Common myeloid progenitor, CD34-positive (primary cell): ENCODE measurements at regions of chr17 and their contacts with region 1.

Region 1: DNA sequence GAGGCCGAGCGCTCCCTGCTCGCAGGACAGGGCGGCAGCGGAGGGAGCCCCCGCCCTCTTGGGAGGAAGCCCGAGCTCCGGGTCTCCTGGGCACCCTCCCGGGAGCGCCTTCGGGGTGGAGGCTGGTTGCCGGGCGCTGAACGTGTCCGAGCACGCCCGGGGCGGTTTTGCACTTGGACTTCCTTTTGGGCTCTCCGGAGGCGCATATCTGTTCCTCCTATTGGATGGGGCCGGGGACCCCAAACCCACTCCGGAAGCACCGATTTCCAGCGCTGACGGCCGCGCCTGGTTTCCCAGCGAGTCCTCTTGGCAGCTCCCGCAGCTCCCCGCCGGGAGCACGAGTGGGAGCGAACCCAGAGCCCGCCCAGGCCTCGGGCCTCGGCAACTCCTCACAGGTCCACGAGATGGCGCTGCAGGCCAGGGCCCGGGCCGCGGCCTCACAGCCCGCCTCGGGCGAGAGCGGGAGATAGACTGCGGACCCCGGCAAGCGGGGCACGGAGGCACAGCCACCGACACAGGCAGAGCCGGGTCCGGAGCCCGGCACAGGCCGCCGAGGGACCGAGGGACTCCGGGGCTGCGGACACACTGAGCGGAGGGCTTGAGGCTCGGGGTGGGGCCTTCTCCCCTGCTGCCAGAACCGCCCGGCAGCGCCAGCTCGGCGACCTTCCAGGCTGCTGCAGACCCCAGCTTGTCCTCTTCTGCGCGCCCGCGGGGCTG is 12.7 kb downstream of the TBX2 start:
- DNase-seq: peak; percentile 68 to 75 (median 75)
- H3K4me3 ChIP-seq: peak overlapping the region; percentile 31 to 76 (median 66)
- H3K27ac ChIP-seq: no peak overlapping the region
- H3K4me1 ChIP-seq: peaks cover 4 to 54% (median 40%) of the 10 kb centered on the region in 4 experiments
- H3K27me3 ChIP-seq: peaks cover 0 to 89% (median 41%) of the 10 kb centered on the region in 5 experiments

Region 2: GRCh38 chr17:61551255-61551742 is 139.0 kb after region 1 on chr17:
- CTCF ChIA-PET with region 1: interaction called, 11 read pairs
- POLR2A ChIA-PET with region 1: no interaction called
- DNase-seq: peak; percentile 42 to 68 (median 67)
- H3K4me3 ChIP-seq: no peak overlapping the region
- H3K27ac ChIP-seq: no peak overlapping the region
- H3K4me1 ChIP-seq: no peaks in the 10 kb centered on the region
- H3K27me3 ChIP-seq: peaks cover 3 to 38% (median 10%) of the 10 kb centered on the region in 5 experiments

Region 3: DNA sequence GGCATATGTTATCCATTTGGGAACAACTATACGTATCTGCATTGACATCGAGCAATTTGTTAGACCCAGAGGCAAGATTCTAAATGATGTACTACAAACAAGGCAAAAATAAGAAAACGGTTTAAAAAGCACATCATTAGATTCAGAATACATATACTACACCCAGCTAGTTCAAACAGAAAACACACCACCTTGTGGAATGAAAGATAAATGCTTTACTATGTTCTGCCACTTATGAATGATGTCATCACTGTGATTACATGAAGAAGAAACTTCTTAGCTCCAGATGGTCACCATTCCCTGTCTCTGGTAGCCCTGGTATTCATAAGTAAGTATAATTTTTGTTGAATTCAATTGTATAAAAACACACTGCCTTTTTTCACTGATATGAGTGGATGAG is 170.9 kb after region 1 on chr17:
- CTCF ChIA-PET with region 1: interaction called, 13 read pairs
- POLR2A ChIA-PET with region 1: no interaction called
- DNase-seq: peak; percentile 48 to 78 (median 73)
- H3K4me3 ChIP-seq: no peak overlapping the region
- H3K27ac ChIP-seq: no peak overlapping the region
- H3K4me1 ChIP-seq: no peaks in the 10 kb centered on the region
- H3K27me3 ChIP-seq: peaks cover 7 to 34% (median 15%) of the 10 kb centered on the region in 5 experiments